ENCODE measurements at regions of chr1 and their contacts with region 1.

Region 1: GRCh38 chr1:86704458-86704971 is at the start of gene SH3GLB1:
- DNase-seq: peak; percentile 73 to 85
- ATAC-seq: peak; percentile 74 to 75
- H3K4me3 ChIP-seq: peak within 1 kb of the TSS; percentile 70 to 89 (median 83)
- H3K27ac ChIP-seq: peak within 1 kb of the TSS; percentile 91 to 98 (median 97)
- H3K4me1 ChIP-seq: peaks cover 37 to 39% of the 10 kb centered on the region in 2 donors
- H3K27me3 ChIP-seq: no peaks in the 10 kb centered on the region
- CTCF ChIP-seq: peak; percentile 91 to 99 (median 95)
- POLR2A ChIP-seq: peak; percentile 79
- total RNA-seq, gene SH3GLB1: 76.6 to 168 (median 112) TPM

Region 2: GRCh38 chr1:86395771-86396497 is 308.6 kb before region 1 on chr1 and contains the start of gene ODF2L:
- in situ Hi-C with region 1: loop called in 1 of 4 experiments (anchors 25 kb)
- intact Hi-C with region 1: loop called (anchors 10 kb)
- DNase-seq: peak; percentile 85
- ATAC-seq: peak; percentile 95 to 98
- H3K4me3 ChIP-seq: peak within 1 kb of the TSS; percentile 74 to 96 (median 86)
- H3K27ac ChIP-seq: peak within 1 kb of the TSS; percentile 64 to 73 (median 72)
- H3K4me1 ChIP-seq: peaks cover 0 to 6% of the 10 kb centered on the region in 2 donors
- H3K27me3 ChIP-seq: no peaks in the 10 kb centered on the region
- CTCF ChIP-seq: no peak
- POLR2A ChIP-seq: peak in 1 of 2 donors; percentile 66
- total RNA-seq, gene ODF2L: 1.7 to 5.4 (median 2.4) TPM

Region 3: GRCh38 chr1:86741947-86742572 is 37.5 kb after region 1 on chr1:
- in situ Hi-C with region 1: no loop called
- intact Hi-C with region 1: loop called (anchors 1 kb)
- DNase-seq: no peak
- ATAC-seq: peak in 1 of 2 donors; percentile 43
- H3K4me3 ChIP-seq: no peak overlapping the region
- H3K27ac ChIP-seq: no peak overlapping the region
- H3K4me1 ChIP-seq: no peaks in the 10 kb centered on the region
- H3K27me3 ChIP-seq: no peaks in the 10 kb centered on the region
- CTCF ChIP-seq: peak; percentile 56 to 75 (median 65)
- POLR2A ChIP-seq: no peak

Region 4: DNA sequence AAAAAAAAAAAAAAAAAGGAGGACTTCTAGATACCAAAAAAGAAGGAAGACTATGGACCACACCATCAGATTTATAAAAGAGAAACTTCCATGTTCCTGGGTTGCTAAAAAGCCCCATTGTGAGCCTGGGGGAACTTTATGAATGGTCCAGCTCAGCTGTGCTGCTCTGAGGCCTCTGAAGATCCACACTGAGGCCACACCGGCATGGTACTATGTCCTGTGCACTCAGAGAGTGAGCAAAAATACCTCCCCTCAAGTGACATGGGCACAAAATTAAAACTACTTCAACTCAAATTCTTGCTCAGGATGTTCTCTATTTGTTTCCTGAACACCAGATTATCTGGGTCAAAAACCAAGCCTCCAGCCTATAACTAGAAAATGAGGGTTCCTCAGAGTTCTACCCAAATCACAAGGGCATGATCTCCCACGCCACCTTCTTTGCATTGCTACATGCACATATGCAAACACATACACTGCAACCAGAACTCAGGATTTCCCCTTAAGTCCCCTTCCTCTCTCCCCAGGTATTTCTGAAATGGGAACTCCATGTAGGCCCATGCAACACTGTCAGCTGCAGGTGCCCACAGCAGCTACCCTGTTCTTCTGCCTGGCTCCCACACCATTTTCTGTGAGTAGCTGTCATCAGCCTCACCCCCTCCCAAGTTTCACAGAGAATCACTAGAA is 94.2 kb after region 1 on chr1:
- in situ Hi-C with region 1: no loop called
- intact Hi-C with region 1: no loop called
- DNase-seq: no peak
- ATAC-seq: no peak
- H3K4me3 ChIP-seq: no peak overlapping the region
- H3K27ac ChIP-seq: no peak overlapping the region
- H3K4me1 ChIP-seq: no peaks in the 10 kb centered on the region
- H3K27me3 ChIP-seq: no peaks in the 10 kb centered on the region
- CTCF ChIP-seq: no peak
- POLR2A ChIP-seq: no peak

Region 5: GRCh38 chr1:86833461-86834215 is 129.1 kb after region 1 on chr1:
- in situ Hi-C with region 1: no loop called
- intact Hi-C with region 1: loop called (anchors 1 kb)
- DNase-seq: peak; percentile 41 to 66
- ATAC-seq: peak; percentile 96 to 97
- H3K4me3 ChIP-seq: no peak overlapping the region
- H3K27ac ChIP-seq: no peak overlapping the region
- H3K4me1 ChIP-seq: no peaks in the 10 kb centered on the region
- H3K27me3 ChIP-seq: no peaks in the 10 kb centered on the region
- CTCF ChIP-seq: peak; percentile 51 to 70 (median 64)
- POLR2A ChIP-seq: no peak

Region 6: GRCh38 chr1:86965012-86965826 is 260.7 kb after region 1 on chr1:
- in situ Hi-C with region 1: no loop called
- intact Hi-C with region 1: loop called (anchors 10 kb)
- DNase-seq: no peak
- ATAC-seq: no peak
- H3K4me3 ChIP-seq: no peak overlapping the region
- H3K27ac ChIP-seq: no peak overlapping the region
- H3K4me1 ChIP-seq: no peaks in the 10 kb centered on the region
- H3K27me3 ChIP-seq: no peaks in the 10 kb centered on the region
- CTCF ChIP-seq: peak; percentile 34 to 69 (median 49)
- POLR2A ChIP-seq: no peak

Region 7: GRCh38 chr1:87335175-87335884 is 630.8 kb after region 1 on chr1:
- in situ Hi-C with region 1: loop called in 1 of 4 experiments (anchors 25 kb)
- intact Hi-C with region 1: loop called (anchors 10 kb)
- DNase-seq: peak; percentile 36 to 47
- ATAC-seq: peak; percentile 40 to 51
- H3K4me3 ChIP-seq: peak overlapping the region; percentile 67 to 80 (median 72)
- H3K27ac ChIP-seq: peak overlapping the region; percentile 72 to 83 (median 77)
- H3K4me1 ChIP-seq: peaks cover 36 to 40% of the 10 kb centered on the region in 2 donors
- H3K27me3 ChIP-seq: no peaks in the 10 kb centered on the region
- CTCF ChIP-seq: peak in 2 of 5 experiments; percentile 22 to 61
- POLR2A ChIP-seq: peak in 1 of 2 donors; percentile 8